Mammary epithelial cell (primary cell): ENCODE measurements at regions of chr21 and their contacts with region 1.

Region 1: DNA sequence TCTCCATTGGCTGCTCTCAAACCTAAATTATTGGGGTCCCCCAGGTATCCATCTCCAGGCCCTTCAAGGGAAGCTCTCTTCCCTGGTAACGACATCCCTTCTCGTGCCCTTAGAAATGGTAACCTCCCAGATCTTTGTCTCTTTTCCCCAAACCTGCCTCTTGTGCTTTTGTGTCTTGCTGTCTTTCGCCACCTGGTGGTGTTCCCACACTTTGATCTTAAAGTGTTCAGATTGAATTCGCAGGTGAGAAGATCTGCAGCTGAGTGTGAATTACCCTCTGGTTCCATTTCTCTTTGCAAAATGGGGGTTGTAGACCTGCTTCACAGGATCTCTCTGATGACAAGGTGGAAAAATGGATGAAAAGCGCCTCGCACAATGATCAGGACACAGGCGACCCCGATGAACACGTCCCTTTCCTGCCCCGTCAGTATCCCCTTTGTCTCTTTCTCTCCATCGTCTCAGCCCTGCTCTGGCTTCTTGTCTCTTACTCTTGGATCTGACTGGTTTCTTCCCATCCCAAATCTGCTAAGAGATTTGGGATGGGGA is 53.1 kb downstream of the DOP1B start:
- DNase-seq: peak; percentile 73
- H3K4me3 ChIP-seq: peak overlapping the region in 2 of 3 experiments; percentile 8 to 14
- H3K27ac ChIP-seq: peak overlapping the region; percentile 60
- H3K4me1 ChIP-seq: peaks cover 42% of the 10 kb centered on the region
- H3K27me3 ChIP-seq: no peaks in the 10 kb centered on the region
- CTCF ChIP-seq: peak; percentile 60 to 77

Region 2: GRCh38 chr21:36141513-36141925 is 68.2 kb before region 1 on chr21:
- CTCF ChIA-PET with region 1: interaction called, 22 read pairs
- dilution Hi-C with region 1: no loop called
- in situ Hi-C with region 1: no loop called
- intact Hi-C with region 1: loop called (anchors 1 kb)
- DNase-seq: peak; percentile 97
- H3K4me3 ChIP-seq: no peak overlapping the region
- H3K27ac ChIP-seq: peak overlapping the region; percentile 76
- H3K4me1 ChIP-seq: peaks cover 5% of the 10 kb centered on the region
- H3K27me3 ChIP-seq: no peaks in the 10 kb centered on the region
- CTCF ChIP-seq: peak; percentile 73 to 83

Region 3: GRCh38 chr21:36156339-36156814 is 53.3 kb before region 1 on chr21:
- CTCF ChIA-PET with region 1: no interaction called
- dilution Hi-C with region 1: loop called (anchors 10 kb)
- in situ Hi-C with region 1: loop called (anchors 5 kb)
- intact Hi-C with region 1: loop called (anchors 1 kb)
- DNase-seq: peak; percentile 97
- H3K4me3 ChIP-seq: peak overlapping the region; percentile 55 to 94 (median 78)
- H3K27ac ChIP-seq: peak overlapping the region; percentile 58
- H3K4me1 ChIP-seq: peaks cover 13% of the 10 kb centered on the region
- H3K27me3 ChIP-seq: no peaks in the 10 kb centered on the region
- CTCF ChIP-seq: no peak

Region 4: DNA sequence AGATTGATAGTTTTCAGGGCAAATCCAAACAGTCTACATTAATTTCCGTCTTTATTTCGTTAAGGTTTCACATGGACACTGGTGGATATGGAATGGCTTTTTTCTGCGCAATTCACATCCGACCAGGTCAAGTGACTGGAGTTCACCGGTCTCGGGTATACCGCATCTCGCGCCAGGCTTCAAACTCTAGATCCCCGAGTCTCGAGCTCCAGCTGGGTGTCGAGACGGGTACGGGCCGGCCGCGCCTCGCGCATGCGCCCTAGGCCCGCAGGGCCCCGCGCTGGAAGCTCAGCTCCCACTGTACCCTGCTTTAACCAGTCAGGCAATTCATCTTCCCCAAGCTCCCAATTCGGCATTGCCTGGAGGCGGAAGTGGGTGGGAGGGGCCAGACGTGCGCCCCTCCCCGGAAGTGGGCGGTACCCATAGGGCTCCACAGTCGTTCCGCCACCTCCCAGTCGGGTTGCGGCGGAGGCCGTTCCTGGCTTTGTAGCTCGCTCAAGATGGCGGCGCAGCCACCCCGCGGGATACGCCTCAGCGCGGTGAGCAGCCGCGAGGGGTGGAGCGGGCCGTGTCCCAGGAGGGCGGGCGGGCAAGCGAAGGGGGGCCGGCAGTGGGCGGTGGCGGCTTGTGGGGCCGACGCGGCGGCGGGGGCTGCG is 110.2 kb after region 1 on chr21 and contains the start of gene MORC3:
- CTCF ChIA-PET with region 1: interaction called, 4 read pairs
- dilution Hi-C with region 1: no loop called
- in situ Hi-C with region 1: loop called in 1 of 2 experiments (anchors 10 kb)
- intact Hi-C with region 1: no loop called
- DNase-seq: peak; percentile 99
- H3K4me3 ChIP-seq: peak within 1 kb of the TSS; percentile 85 to 97 (median 97)
- H3K27ac ChIP-seq: peak within 1 kb of the TSS; percentile 95
- H3K4me1 ChIP-seq: peaks cover 19% of the 10 kb centered on the region
- H3K27me3 ChIP-seq: no peaks in the 10 kb centered on the region
- CTCF ChIP-seq: no peak
- total RNA-seq, gene MORC3: 32.3 to 44.2 TPM

Region 5: DNA sequence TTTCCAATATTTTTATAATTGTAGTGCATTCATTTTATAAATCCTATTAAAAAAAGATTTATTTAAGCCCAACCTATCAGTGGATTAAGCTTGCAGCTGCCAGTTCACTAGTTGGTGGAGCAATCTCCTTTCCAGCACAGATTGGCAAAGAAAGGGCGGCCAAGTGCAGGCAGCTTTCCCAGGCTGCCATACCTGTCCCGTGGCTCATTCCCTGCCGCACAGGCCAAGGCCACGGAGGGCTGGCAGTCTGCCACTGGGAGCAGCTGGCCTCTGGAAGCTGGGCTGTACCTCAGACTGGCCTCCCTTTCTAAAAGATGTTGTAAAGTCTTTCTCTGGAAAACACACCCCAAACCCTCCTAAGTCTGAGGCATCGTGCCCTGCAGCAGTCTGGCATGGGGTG is 563.4 kb after region 1 on chr21:
- CTCF ChIA-PET with region 1: no interaction called
- dilution Hi-C with region 1: loop called (anchors 10 kb)
- in situ Hi-C with region 1: no loop called
- intact Hi-C with region 1: no loop called
- DNase-seq: peak; percentile 84
- H3K4me3 ChIP-seq: no peak overlapping the region
- H3K27ac ChIP-seq: no peak overlapping the region
- H3K4me1 ChIP-seq: peaks cover 5% of the 10 kb centered on the region
- H3K27me3 ChIP-seq: no peaks in the 10 kb centered on the region
- CTCF ChIP-seq: no peak